PC-9 (cell line): ENCODE measurements at regions of chr21 and their contacts with region 1.

Region 1: DNA sequence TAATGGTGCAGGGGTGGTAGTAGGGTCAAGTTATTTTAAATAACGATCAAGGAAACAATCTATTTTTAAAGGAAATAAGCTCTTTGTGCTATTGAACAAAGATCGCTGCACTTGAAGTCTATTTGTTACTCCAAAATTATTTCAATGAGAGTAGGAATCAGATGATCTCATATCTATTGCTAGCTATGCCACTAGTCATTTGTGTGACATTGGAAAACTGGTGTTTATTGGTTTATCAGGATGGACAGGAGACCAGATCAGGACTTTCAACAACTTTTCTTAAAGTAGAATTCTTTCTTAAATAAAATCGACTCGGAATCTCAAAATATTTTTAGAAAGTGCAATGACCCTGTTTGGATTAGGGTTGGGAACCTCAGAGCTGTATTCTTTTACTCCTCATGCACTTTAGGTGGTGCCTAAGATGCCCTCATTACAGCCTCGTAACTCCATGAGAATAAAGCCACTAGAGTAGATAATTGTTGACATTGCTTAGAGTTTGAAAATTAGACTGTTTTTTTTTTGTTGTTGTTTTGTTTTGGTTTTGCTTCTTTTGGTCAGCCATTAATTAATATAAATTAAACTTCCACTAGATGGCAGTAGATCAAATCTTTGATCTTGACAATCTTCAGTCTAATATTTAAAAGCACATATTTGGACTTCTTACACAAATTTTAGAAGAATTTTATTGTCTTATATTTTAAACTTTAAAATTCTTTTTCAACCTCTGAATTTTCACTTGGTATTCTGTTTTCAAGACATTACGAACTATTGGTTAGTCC is 352.4 kb downstream of the USP25 start:
- DNase-seq: no peak
- H3K4me3 ChIP-seq: no peak overlapping the region
- H3K27ac ChIP-seq: no peak overlapping the region
- H3K4me1 ChIP-seq: no peaks in the 10 kb centered on the region
- H3K27me3 ChIP-seq: no peaks in the 10 kb centered on the region
- CTCF ChIP-seq: peak; percentile 61

Region 2: DNA sequence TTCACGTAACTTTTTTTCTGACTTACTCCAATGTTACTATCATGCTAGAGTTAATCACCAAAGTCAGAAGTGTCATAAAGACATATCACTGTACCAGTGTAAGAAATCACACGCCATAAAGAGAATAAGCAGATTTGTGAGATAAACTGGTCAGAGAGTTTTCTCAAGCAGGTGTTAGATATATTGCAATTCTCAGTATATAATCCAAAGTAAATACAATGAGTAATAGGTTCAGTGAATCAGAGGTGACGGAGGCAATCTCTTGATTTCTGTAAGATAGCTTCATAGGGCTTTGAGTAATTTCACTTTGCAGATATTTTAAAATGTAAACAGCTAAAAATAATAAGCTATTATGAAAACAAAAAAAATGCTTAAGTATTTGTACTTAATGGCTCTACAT is 233.6 kb before region 1 on chr21:
- CTCF ChIA-PET with region 1: interaction called, 18 read pairs
- POLR2A ChIA-PET with region 1: no interaction called
- intact Hi-C with region 1: no loop called
- DNase-seq: peak in 1 of 2 experiments; percentile 82
- H3K4me3 ChIP-seq: no peak overlapping the region
- H3K27ac ChIP-seq: peak overlapping the region; percentile 70
- H3K4me1 ChIP-seq: peaks cover 36% of the 10 kb centered on the region
- H3K27me3 ChIP-seq: no peaks in the 10 kb centered on the region
- CTCF ChIP-seq: no peak

Region 3: GRCh38 chr21:16330082-16330907 is 248.1 kb after region 1 on chr21:
- CTCF ChIA-PET with region 1: no interaction called
- POLR2A ChIA-PET with region 1: no interaction called
- intact Hi-C with region 1: loop called (anchors 1 kb)
- DNase-seq: peak in 1 of 2 experiments; percentile 1
- H3K4me3 ChIP-seq: no peak overlapping the region
- H3K27ac ChIP-seq: no peak overlapping the region
- H3K4me1 ChIP-seq: no peaks in the 10 kb centered on the region
- H3K27me3 ChIP-seq: no peaks in the 10 kb centered on the region
- CTCF ChIP-seq: peak; percentile 67

Region 4: GRCh38 chr21:17269760-17270159 is 1187.5 kb after region 1 on chr21:
- CTCF ChIA-PET with region 1: no interaction called
- POLR2A ChIA-PET with region 1: no interaction called
- intact Hi-C with region 1: loop called (anchors 10 kb)
- DNase-seq: no peak
- H3K4me3 ChIP-seq: no peak overlapping the region
- H3K27ac ChIP-seq: no peak overlapping the region
- H3K4me1 ChIP-seq: no peaks in the 10 kb centered on the region
- H3K27me3 ChIP-seq: no peaks in the 10 kb centered on the region
- CTCF ChIP-seq: no peak